Sigmoid colon (tissue), 7 donors: ENCODE measurements at regions of chr16 and their contacts with region 1.

Region 1: DNA sequence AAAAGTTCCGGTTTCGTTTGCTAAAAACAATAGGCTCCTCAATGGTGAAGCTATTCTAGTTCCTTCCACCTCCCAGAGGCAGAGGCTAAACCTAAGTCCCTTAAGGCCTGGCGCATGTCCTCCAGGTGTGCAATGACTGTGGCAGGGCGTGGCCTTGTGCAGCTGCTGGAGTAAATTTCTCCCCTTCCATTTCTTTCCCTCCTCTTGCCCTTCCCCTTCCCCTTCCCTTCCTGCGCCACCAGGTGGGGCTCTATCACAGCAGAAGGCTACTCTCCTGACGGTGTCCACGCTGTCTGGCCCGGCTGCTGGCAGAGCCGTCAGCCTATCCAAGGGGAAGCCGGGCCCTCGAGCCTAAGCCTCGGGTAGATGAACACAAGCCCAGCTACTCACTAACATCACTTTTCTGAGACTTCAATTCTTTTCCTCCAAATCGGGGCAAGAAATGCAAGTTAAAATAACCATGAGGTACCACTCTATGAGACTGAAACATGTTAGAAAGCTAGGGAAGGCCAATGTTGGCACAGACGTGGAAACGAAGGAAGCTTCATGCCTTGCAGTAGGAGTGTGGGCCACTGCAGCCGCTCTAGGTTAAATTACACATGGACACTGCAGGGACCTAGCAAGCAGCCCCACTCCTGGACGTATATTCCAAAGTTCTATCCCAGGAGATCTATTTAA is 34.4 kb downstream of the C16orf78 start:
- DNase-seq: peak; percentile 91
- H3K4me3 ChIP-seq: no peak overlapping the region
- H3K27ac ChIP-seq: no peak overlapping the region
- H3K4me1 ChIP-seq: peaks cover 0 to 4% (median 0%) of the 10 kb centered on the region in 4 donors
- H3K27me3 ChIP-seq: peaks cover 0 to 4% (median 0%) of the 10 kb centered on the region in 3 donors
- CTCF ChIP-seq: peak; percentile 77 to 86 (median 82)
- EP300 ChIP-seq: no peak
- POLR2A ChIP-seq: no peak

Region 2: DNA sequence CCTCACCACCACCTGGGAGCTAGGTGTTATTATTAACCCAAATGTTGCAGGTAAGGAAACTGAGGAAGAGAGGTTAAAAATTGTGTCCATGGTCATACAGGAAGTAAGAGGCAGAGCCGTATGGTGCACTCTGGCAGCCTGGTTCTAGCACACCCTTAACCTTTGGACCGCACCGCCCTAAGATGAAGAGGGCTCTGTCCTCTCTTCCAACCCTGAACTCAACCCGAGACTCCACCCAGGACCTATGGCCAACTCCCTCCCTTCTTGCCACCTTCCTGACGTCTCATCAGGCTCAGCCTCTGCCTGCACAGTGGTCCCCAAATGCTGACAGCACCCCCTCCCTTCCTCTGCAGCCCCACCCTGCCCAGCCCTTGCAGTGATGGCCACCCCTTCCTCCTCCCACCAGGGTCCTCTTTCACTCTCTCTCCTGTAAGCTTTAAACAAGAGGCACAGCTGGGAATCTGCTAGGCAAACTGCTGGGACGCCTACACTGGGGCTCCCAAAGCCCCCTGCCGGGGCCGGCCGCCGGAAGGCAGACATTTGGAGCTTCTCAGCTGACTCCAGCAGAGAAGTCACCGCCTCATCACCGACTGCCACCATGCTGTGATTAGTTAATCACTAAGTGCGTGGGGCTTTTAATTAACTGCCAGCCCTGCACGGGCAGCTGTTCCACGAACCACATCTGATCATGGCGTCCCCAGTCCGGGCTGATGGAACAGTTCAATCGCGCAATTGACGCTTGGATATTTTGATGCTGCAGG is 51.1 kb before region 1 on chr16:
- intact Hi-C with region 1: no loop called
- DNase-seq: no peak
- H3K4me3 ChIP-seq: no peak overlapping the region
- H3K27ac ChIP-seq: no peak overlapping the region
- H3K4me1 ChIP-seq: no peaks in the 10 kb centered on the region
- H3K27me3 ChIP-seq: peaks cover 0 to 5% (median 0%) of the 10 kb centered on the region in 3 donors
- CTCF ChIP-seq: no peak
- EP300 ChIP-seq: no peak
- POLR2A ChIP-seq: no peak

Region 3: DNA sequence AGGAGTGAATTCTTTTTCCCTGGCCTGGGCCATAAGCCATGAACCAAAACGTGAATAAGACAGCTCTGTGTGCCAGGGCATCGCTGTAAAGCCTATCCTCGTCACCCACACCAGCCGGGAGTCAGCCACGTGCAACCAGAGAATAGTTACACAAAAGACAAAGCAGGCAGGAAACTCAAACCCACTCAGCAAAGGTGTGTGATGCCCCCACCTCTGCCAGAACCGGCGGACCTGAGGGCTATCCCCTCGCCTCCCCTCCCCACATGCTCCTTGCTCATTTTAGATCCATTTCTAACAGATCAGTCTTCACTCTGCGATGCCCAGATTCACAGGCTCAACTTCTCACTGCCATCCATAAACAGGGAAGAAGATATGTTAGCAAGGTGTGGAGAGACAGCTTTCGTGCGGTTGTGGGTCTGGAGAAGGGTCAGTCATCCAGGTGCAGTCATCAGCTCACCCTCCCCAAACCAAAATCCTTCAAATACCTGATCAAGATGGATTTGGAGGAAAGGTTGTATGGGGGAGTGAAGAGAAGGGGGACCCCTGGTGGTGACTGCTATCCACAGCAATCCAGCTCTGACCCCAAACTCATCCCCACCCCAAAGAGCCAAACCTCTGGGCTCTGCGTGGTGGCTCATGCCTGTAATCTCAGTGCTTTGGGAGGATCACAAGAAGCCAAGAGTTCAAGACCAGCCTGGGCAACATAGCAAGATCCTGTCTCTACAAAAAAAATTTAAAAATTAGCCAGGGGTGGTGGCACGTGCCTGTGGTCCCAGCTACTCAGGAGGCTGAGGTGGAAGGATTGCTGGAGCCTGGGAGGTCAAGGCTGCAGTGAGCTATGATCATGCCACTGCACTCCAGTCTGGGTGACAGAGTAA is 184.8 kb after region 1 on chr16:
- intact Hi-C with region 1: loop called (anchors 2 kb)
- DNase-seq: no peak
- H3K4me3 ChIP-seq: no peak overlapping the region
- H3K27ac ChIP-seq: no peak overlapping the region
- H3K4me1 ChIP-seq: peaks cover 0 to 21% (median 11%) of the 10 kb centered on the region in 4 donors
- H3K27me3 ChIP-seq: no peaks in the 10 kb centered on the region
- CTCF ChIP-seq: peak in 3 of 4 experiments; percentile 55 to 73 (median 71)
- EP300 ChIP-seq: no peak
- POLR2A ChIP-seq: no peak

Region 4: DNA sequence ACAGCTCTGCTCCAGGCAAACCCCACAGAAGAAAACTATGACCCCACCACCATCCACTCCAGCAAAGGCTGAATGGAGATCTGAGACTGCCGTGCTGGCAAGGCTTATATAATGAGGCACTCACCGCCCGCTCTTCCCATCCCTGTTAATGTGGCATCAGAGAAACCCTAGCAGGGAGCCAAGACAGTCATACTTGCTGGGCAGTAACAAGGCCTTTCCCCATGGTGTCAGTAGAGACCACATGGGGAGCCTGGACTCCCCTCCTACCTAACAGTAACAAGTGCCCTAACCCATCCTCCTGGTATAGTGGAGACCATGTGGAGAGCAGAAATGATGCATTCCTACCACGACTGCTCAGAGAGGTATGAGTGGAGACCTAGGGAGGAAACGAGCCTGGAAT is 200.8 kb after region 1 on chr16:
- intact Hi-C with region 1: loop called (anchors 5 kb)
- DNase-seq: peak; percentile 68
- H3K4me3 ChIP-seq: no peak overlapping the region
- H3K27ac ChIP-seq: peak overlapping the region in 2 of 4 donors; percentile 25 to 51
- H3K4me1 ChIP-seq: peaks cover 0 to 16% (median 13%) of the 10 kb centered on the region in 4 donors
- H3K27me3 ChIP-seq: no peaks in the 10 kb centered on the region
- CTCF ChIP-seq: peak; percentile 10 to 61 (median 26)
- EP300 ChIP-seq: no peak
- POLR2A ChIP-seq: no peak

Region 5: GRCh38 chr16:49876716-49877129 is 468.7 kb after region 1 on chr16:
- intact Hi-C with region 1: loop called (anchors 5 kb)
- DNase-seq: peak; percentile 84
- H3K4me3 ChIP-seq: peak overlapping the region; percentile 22 to 49 (median 42)
- H3K27ac ChIP-seq: peak overlapping the region in 3 of 4 donors; percentile 30 to 42 (median 42)
- H3K4me1 ChIP-seq: peaks cover 0 to 11% (median 9%) of the 10 kb centered on the region in 4 donors
- H3K27me3 ChIP-seq: peaks cover 0 to 14% (median 9%) of the 10 kb centered on the region in 3 donors
- CTCF ChIP-seq: peak; percentile 47 to 94 (median 72)
- EP300 ChIP-seq: no peak
- POLR2A ChIP-seq: no peak

Region 6: DNA sequence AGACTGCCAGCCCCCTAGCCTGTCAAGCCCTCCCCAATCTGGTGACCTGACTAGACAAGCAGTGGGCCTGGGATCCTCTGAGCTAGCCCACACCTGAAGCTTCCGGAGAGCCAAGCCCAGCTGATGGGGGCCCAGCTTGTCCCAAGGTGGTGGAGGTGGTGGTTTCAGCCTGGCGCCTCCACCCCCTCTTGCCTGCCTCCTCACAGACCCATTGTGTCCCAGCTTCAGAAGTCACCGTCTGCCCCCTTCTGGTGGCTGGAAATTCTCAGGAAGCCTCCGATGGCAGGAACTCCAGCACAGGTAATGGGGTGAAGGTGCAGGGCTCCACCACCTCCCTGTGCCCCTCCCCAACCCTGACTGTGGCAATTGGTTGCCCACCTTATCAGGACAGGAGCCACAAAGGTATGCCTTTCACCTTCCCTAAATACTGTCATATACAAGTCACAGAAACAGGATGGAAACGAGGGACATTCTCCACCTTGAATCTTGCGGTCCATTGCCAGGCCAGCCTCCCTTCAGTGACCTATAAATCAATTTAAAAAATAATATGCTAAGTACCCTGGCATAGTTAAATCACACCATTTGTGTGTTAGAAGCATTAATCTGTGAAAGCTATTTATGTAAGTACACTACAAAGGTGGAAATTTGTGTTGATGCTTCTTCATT is 513.9 kb after region 1 on chr16:
- intact Hi-C with region 1: loop called (anchors 2 kb)
- DNase-seq: peak; percentile 72
- H3K4me3 ChIP-seq: no peak overlapping the region
- H3K27ac ChIP-seq: no peak overlapping the region
- H3K4me1 ChIP-seq: no peaks in the 10 kb centered on the region
- H3K27me3 ChIP-seq: no peaks in the 10 kb centered on the region
- CTCF ChIP-seq: peak; percentile 14 to 54 (median 40)
- EP300 ChIP-seq: no peak
- POLR2A ChIP-seq: no peak